ENCODE measurements at regions of chr6 and their contacts with region 1.

Region 1: DNA sequence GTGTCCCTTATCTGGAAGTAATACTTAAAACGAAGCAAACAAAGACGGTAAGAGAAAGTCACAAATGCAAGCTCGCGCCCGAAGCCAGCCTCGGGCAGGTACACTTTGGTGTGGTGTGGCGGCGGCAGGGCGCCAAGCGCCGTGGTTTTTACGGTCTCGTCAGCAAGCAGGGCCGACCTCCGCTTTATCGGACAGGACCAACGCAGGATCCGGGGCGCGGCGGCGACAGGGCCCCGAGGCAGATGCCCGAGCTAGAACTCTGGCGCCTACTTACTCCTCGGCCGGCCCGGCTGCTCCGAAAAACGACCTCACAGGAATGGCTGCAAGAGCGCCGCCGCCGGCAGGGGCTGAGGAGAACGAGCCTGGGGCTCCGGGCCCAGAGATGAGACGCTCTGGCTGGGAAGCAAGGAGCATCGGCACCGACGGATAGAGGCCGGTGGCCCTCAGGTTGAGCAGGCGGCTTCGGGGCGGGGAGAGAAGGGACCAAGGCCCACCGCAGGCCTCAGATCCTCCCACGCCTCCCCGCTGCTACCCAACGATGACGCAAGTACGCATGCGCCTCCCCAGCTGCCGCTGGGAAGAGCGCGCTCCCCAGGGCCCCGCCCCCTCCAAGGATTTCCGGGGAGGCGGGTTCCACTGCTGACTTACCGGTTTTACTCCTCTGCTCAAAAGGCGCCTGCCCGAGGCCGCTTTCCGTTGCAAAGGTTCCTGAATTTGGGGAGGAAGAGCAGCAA is 60.6 kb downstream of the FAM217A start:
- DNase-seq: peak; percentile 91 to 98 (median 95)
- ATAC-seq: peak; percentile 83
- H3K4me3 ChIP-seq: peak overlapping the region; percentile 76
- H3K4me3 Mint-ChIP-seq: peak overlapping the region; percentile 86 to 99 (median 94)
- H3K27ac ChIP-seq: peak overlapping the region; percentile 95
- H3K27ac Mint-ChIP-seq: peak overlapping the region; percentile 95 to 100 (median 96)
- H3K4me1 ChIP-seq: peaks cover 27 to 39% of the 10 kb centered on the region in 2 donors
- H3K4me1 Mint-ChIP-seq: peaks cover 45 to 88% (median 70%) of the 10 kb centered on the region in 7 donors
- H3K27me3 ChIP-seq: no peaks in the 10 kb centered on the region
- H3K27me3 Mint-ChIP-seq: no peaks in the 10 kb centered on the region

Region 2: GRCh38 chr6:3068329-3069214 is 949.8 kb before region 1 on chr6 and contains the start of gene RIPK1:
- CTCF ChIA-PET with region 1: no interaction called
- POLR2A ChIA-PET with region 1: interaction called, 7 read pairs
- intact Hi-C with region 1: loop called (anchors 1 to 2 kb)
- DNase-seq: peak; percentile 92 to 98 (median 95)
- ATAC-seq: peak; percentile 88
- H3K4me3 ChIP-seq: peak within 1 kb of the TSS; percentile 86
- H3K4me3 Mint-ChIP-seq: peak within 1 kb of the TSS; percentile 91 to 99 (median 96)
- H3K27ac ChIP-seq: peak within 1 kb of the TSS; percentile 99
- H3K27ac Mint-ChIP-seq: peak within 1 kb of the TSS; percentile 92 to 99 (median 98)
- H3K4me1 ChIP-seq: peaks cover 23% of the 10 kb centered on the region in 2 donors
- H3K4me1 Mint-ChIP-seq: peaks cover 41 to 83% (median 69%) of the 10 kb centered on the region in 7 donors
- H3K27me3 ChIP-seq: no peaks in the 10 kb centered on the region
- H3K27me3 Mint-ChIP-seq: no peaks in the 10 kb centered on the region
- total RNA-seq, gene RIPK1: 20.3 to 34.8 (median 32.4) TPM

Region 3: GRCh38 chr6:3356056-3356761 is 662.1 kb before region 1 on chr6:
- CTCF ChIA-PET with region 1: no interaction called
- POLR2A ChIA-PET with region 1: no interaction called
- intact Hi-C with region 1: loop called in 1 of 2 experiments (anchors 1 kb)
- DNase-seq: peak in 8 of 9 donors; percentile 31 to 86 (median 78)
- ATAC-seq: peak; percentile 89
- H3K4me3 ChIP-seq: peak overlapping the region; percentile 65
- H3K4me3 Mint-ChIP-seq: peak overlapping the region; percentile 76 to 99 (median 88)
- H3K27ac ChIP-seq: peak overlapping the region; percentile 78
- H3K27ac Mint-ChIP-seq: peak overlapping the region in 8 of 9 donors; percentile 92 to 100 (median 98)
- H3K4me1 ChIP-seq: peaks cover 7 to 27% of the 10 kb centered on the region in 2 donors
- H3K4me1 Mint-ChIP-seq: peaks cover 14 to 79% (median 58%) of the 10 kb centered on the region in 7 donors
- H3K27me3 ChIP-seq: no peaks in the 10 kb centered on the region
- H3K27me3 Mint-ChIP-seq: peaks cover 0 to 43% (median 0%) of the 10 kb centered on the region in 5 donors

Region 4: GRCh38 chr6:3990692-3991501 is 27.4 kb before region 1 on chr6:
- CTCF ChIA-PET with region 1: interaction called, 5 read pairs
- POLR2A ChIA-PET with region 1: interaction called, 4 read pairs
- intact Hi-C with region 1: loop called in 1 of 2 experiments (anchors 1 kb)
- DNase-seq: peak; percentile 45 to 72 (median 58)
- ATAC-seq: peak; percentile 96
- H3K4me3 ChIP-seq: no peak overlapping the region
- H3K4me3 Mint-ChIP-seq: peak overlapping the region in 2 of 10 donors; percentile 19 to 29
- H3K27ac ChIP-seq: no peak overlapping the region
- H3K27ac Mint-ChIP-seq: peak overlapping the region in 3 of 9 donors; percentile 3 to 43 (median 19)
- H3K4me1 ChIP-seq: peaks cover 0 to 7% of the 10 kb centered on the region in 2 donors
- H3K4me1 Mint-ChIP-seq: peaks cover 13 to 37% (median 25%) of the 10 kb centered on the region in 7 donors
- H3K27me3 ChIP-seq: no peaks in the 10 kb centered on the region
- H3K27me3 Mint-ChIP-seq: no peaks in the 10 kb centered on the region

Region 5: GRCh38 chr6:4775584-4776494 is 757.5 kb after region 1 on chr6 and contains the start of gene CDYL:
- CTCF ChIA-PET with region 1: no interaction called
- POLR2A ChIA-PET with region 1: interaction called, 3 read pairs
- intact Hi-C with region 1: loop called (anchors 2 to 5 kb)
- DNase-seq: peak; percentile 75 to 94 (median 88)
- ATAC-seq: peak; percentile 89
- H3K4me3 ChIP-seq: peak within 1 kb of the TSS; percentile 58
- H3K4me3 Mint-ChIP-seq: peak within 1 kb of the TSS; percentile 84 to 96 (median 93)
- H3K27ac ChIP-seq: peak within 1 kb of the TSS; percentile 63
- H3K27ac Mint-ChIP-seq: peak within 1 kb of the TSS; percentile 61 to 94 (median 87)
- H3K4me1 ChIP-seq: peaks cover 0 to 10% of the 10 kb centered on the region in 2 donors
- H3K4me1 Mint-ChIP-seq: peaks cover 32 to 48% (median 46%) of the 10 kb centered on the region in 7 donors
- H3K27me3 ChIP-seq: no peaks in the 10 kb centered on the region
- H3K27me3 Mint-ChIP-seq: peaks cover 0 to 38% (median 0%) of the 10 kb centered on the region in 5 donors
- total RNA-seq, gene CDYL: 25.5 to 43.3 (median 35.1) TPM

Region 6: GRCh38 chr6:6003621-6004366 is 1985.5 kb after region 1 on chr6:
- CTCF ChIA-PET with region 1: no interaction called
- POLR2A ChIA-PET with region 1: no interaction called
- intact Hi-C with region 1: loop called in 1 of 2 experiments (anchors 5 kb)
- DNase-seq: peak in 6 of 9 donors; percentile 31 to 59 (median 48)
- ATAC-seq: no peak
- H3K4me3 ChIP-seq: peak overlapping the region; percentile 46
- H3K4me3 Mint-ChIP-seq: peak overlapping the region; percentile 75 to 94 (median 84)
- H3K27ac ChIP-seq: no peak overlapping the region
- H3K27ac Mint-ChIP-seq: peak overlapping the region in 7 of 9 donors; percentile 52 to 90 (median 75)
- H3K4me1 ChIP-seq: peaks cover 22 to 67% of the 10 kb centered on the region in 2 donors
- H3K4me1 Mint-ChIP-seq: peaks cover 45 to 86% (median 71%) of the 10 kb centered on the region in 7 donors
- H3K27me3 ChIP-seq: peaks cover 79 to 88% of the 10 kb centered on the region in 2 donors
- H3K27me3 Mint-ChIP-seq: peaks cover 81 to 96% (median 86%) of the 10 kb centered on the region in 5 donors

Measured in naive thymus-derived CD4-positive, alpha-beta T cell (primary cell).